ENCODE measurements at regions of chr3 and their contacts with region 1.

Region 1: DNA sequence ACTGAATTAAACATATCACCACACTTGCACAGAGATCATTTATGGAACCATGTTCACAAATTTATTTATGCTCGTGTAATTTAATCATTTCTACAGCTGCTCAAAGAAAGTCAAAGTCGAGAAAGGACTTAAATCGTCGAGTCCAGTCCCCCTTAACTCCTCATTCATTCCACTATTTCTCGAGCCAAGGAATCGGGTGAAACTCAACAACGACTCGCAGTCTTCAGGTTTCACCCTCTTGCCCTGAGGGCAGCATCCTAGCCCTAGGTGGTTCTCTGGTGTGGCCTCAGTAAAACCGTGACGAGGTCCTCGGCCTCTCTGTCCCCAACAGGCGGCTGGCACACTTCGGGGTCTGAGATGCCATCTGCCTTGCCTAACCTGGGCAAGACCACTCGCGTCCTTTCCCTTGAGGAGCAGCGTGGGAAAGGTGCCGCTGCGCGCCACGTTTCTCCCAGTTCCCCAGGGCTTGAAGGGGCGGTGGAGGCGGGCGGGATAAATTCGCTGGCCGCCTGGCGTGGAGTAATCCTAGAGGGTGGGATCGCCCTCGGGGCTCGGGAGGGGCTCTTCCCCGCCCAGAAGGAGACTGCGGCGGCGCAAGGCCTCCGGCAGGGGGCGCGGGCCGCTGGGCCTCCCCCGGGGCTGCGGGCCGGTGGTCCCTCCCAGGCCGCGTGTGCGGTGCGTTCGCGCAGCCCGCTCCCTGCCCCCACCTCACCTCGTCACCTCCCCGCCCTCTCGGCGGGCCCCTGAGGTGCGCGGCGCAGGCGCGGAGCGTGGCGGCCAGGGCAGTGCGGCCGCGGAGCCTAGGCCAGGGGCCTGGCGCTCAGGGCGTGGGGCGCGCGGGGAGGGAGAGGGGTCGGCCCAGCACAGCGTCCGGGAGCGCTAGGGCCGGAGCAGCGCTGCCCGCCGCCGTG is at the start of gene ZNF639:
- DNase-seq: peak; percentile 64
- H3K4me3 ChIP-seq: peak within 1 kb of the TSS; percentile 72 to 86
- H3K27ac ChIP-seq: peak within 1 kb of the TSS; percentile 95
- H3K4me1 ChIP-seq: peaks cover 4% of the 10 kb centered on the region
- H3K27me3 ChIP-seq: no peaks in the 10 kb centered on the region
- CTCF ChIP-seq: peak; percentile 74 to 82 (median 80)
- POLR2A ChIP-seq: peak; percentile 46
- total RNA-seq, gene ZNF639: 48.6 to 50.7 TPM

Region 2: GRCh38 chr3:179015551-179016020 is 307.0 kb before region 1 on chr3:
- intact Hi-C with region 1: loop called (anchors 2 kb)
- DNase-seq: peak; percentile 60
- H3K4me3 ChIP-seq: no peak overlapping the region
- H3K27ac ChIP-seq: no peak overlapping the region
- H3K4me1 ChIP-seq: no peaks in the 10 kb centered on the region
- H3K27me3 ChIP-seq: no peaks in the 10 kb centered on the region
- CTCF ChIP-seq: peak; percentile 37 to 81 (median 72)
- POLR2A ChIP-seq: no peak

Region 3: DNA sequence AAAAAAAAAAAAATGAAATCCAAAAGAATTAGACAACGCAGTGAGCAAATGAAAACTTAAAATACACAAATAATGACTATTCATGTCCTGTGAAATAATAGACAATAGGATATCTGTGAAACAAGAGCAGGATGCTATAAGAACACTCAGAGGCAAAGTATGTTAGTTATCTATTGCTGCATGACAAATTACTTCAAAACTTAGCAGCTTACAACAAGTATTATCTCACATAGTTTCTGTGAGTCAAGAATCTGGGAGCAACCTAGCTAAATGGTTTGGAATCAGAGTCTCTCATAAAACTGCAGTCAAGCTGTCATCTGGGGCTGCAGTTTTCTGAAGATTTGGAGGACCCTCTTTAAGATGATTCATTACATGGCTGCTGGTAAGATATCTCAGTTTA is 214.5 kb before region 1 on chr3:
- intact Hi-C with region 1: loop called (anchors 5 kb)
- DNase-seq: no peak
- H3K4me3 ChIP-seq: no peak overlapping the region
- H3K27ac ChIP-seq: no peak overlapping the region
- H3K4me1 ChIP-seq: no peaks in the 10 kb centered on the region
- H3K27me3 ChIP-seq: no peaks in the 10 kb centered on the region
- CTCF ChIP-seq: no peak
- POLR2A ChIP-seq: no peak

Region 4: GRCh38 chr3:179147873-179148615 is 174.5 kb before region 1 on chr3 and contains the start of gene PIK3CA:
- intact Hi-C with region 1: loop called (anchors 2 kb)
- DNase-seq: peak; percentile 97
- H3K4me3 ChIP-seq: peak within 1 kb of the TSS; percentile 92 to 98
- H3K27ac ChIP-seq: peak within 1 kb of the TSS; percentile 99
- H3K4me1 ChIP-seq: no peaks in the 10 kb centered on the region
- H3K27me3 ChIP-seq: no peaks in the 10 kb centered on the region
- CTCF ChIP-seq: no peak
- POLR2A ChIP-seq: peak; percentile 64
- total RNA-seq, gene PIK3CA: 10.2 to 21.9 TPM

Region 5: DNA sequence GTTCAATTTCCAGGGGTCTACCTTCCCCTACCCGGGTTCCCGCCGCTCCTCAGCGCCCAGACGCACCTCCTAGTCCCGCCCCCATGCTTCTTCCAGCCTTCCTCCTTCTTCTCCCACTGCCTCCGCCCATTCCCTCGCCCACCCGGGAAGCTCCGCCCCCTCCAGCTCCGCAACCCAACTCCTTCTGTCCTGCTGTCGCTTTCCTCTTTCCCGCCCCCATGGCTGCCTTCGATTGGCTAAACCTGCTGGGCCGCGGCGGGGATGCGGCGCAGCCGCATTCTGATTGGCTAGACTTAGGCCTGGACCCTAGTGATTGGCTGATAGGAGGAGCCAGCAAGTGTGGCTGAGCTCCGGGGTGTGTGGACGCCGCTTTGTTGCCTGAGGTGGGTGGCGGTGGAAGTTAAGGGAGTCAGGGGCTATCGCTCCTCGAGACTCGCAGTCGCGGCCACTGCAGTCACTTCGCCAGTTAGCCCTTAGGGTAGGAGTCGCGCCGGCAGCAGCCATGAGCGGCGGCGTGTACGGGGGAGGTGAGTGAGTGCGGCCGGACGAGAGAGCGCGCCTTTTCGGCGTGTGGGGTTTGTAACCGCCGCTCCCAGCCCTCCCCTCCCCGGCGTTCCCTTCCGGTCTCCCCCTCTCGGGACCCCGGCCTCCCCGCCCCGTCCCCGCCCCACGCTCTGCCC is 240.2 kb after region 1 on chr3 and contains the start of gene ACTL6A:
- intact Hi-C with region 1: loop called (anchors 5 kb)
- DNase-seq: peak; percentile 100
- H3K4me3 ChIP-seq: peak within 1 kb of the TSS; percentile 71 to 87
- H3K27ac ChIP-seq: peak within 1 kb of the TSS; percentile 82 to 89
- H3K4me1 ChIP-seq: no peaks in the 10 kb centered on the region
- H3K27me3 ChIP-seq: no peaks in the 10 kb centered on the region
- CTCF ChIP-seq: no peak
- POLR2A ChIP-seq: peak; percentile 46
- total RNA-seq, gene ACTL6A: 35.6 to 73.6 TPM

Measured in prostate gland (tissue), 2 donors.